ENCODE measurements at regions of chr12 and their contacts with region 1.

Region 1: GRCh38 chr12:89524541-89525285 is at the start of gene GALNT4:
- DNase-seq: peak; percentile 80
- ATAC-seq: peak; percentile 61
- H3K4me3 Mint-ChIP-seq: peak within 1 kb of the TSS; percentile 98
- H3K27ac Mint-ChIP-seq: peak within 1 kb of the TSS; percentile 97
- H3K4me1 Mint-ChIP-seq: peaks cover 53% of the 10 kb centered on the region
- H3K27me3 Mint-ChIP-seq: no peaks in the 10 kb centered on the region
- total RNA-seq, gene GALNT4: 15.6 to 16.3 TPM

Region 2: GRCh38 chr12:89019408-89020120 is 505.1 kb before region 1 on chr12:
- POLR2A ChIA-PET with region 1: interaction called, 11 read pairs
- DNase-seq: peak; percentile 64
- ATAC-seq: peak; percentile 97
- H3K4me3 Mint-ChIP-seq: no peak overlapping the region
- H3K27ac Mint-ChIP-seq: no peak overlapping the region
- H3K4me1 Mint-ChIP-seq: peaks cover 30% of the 10 kb centered on the region
- H3K27me3 Mint-ChIP-seq: peaks cover 15% of the 10 kb centered on the region

Region 3: GRCh38 chr12:89470741-89471509 is 53.8 kb before region 1 on chr12:
- POLR2A ChIA-PET with region 1: interaction called, 62 read pairs
- DNase-seq: no peak
- ATAC-seq: peak; percentile 45
- H3K4me3 Mint-ChIP-seq: peak overlapping the region; percentile 41
- H3K27ac Mint-ChIP-seq: peak overlapping the region; percentile 50
- H3K4me1 Mint-ChIP-seq: peaks cover 62% of the 10 kb centered on the region
- H3K27me3 Mint-ChIP-seq: no peaks in the 10 kb centered on the region